ENCODE measurements at regions of chr2 and their contacts with region 1.

Region 1: GRCh38 chr2:235238537-235238936 is 255.3 kb upstream of the AGAP1 start:
- DNase-seq: peak; percentile 56
- H3K4me3 Mint-ChIP-seq: no peak overlapping the region
- H3K27ac Mint-ChIP-seq: no peak overlapping the region
- H3K4me1 Mint-ChIP-seq: no peaks in the 10 kb centered on the region
- H3K27me3 Mint-ChIP-seq: peaks cover 43% of the 10 kb centered on the region
- CTCF ChIP-seq: no peak

Region 2: DNA sequence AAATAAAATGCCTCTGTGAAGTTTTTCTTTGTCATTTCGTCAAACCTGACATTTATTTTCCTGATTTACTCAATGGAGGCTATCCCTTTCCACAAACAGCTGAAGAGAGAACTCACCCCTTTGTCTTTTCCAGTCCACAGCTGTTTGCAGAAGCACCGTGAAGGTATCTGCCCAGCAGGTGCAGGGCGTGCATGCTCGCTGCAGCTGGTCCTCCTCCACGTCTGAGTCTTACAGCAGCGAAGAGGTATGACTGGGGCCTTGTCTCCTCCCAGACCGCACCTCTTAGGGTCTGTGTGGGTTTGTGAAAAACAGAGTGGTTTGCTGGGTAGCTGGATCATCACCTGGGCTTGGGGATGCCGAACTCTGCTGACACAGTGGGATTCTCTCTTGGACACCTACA is 1178.3 kb before region 1 on chr2:
- CTCF ChIA-PET with region 1: no interaction called
- POLR2A ChIA-PET with region 1: no interaction called
- intact Hi-C with region 1: loop called (anchors 5 kb)
- DNase-seq: no peak
- H3K4me3 Mint-ChIP-seq: no peak overlapping the region
- H3K27ac Mint-ChIP-seq: no peak overlapping the region
- H3K4me1 Mint-ChIP-seq: peaks cover 4% of the 10 kb centered on the region
- H3K27me3 Mint-ChIP-seq: peaks cover 13% of the 10 kb centered on the region
- CTCF ChIP-seq: no peak

Region 3: DNA sequence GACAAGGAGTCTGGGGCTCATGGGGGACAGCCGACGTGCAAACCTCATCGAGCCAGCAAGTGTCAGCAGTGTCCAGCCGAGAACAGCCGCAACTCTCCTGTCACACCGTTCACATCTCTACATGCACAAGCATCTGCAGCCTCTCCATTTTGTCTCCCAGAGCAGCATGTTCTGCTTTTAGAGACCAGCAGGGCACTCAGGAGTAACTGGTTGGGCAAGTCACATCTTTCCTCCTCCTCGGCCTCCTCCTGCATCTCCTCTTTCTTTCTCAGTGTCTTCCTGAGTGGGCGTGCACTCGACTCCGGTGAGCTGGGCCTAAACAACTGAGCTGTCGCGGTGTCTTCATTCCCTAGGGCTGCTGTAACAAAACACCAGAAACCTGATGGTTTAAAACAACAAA is 36.8 kb before region 1 on chr2:
- CTCF ChIA-PET with region 1: no interaction called
- POLR2A ChIA-PET with region 1: no interaction called
- intact Hi-C with region 1: no loop called
- DNase-seq: no peak
- H3K4me3 Mint-ChIP-seq: no peak overlapping the region
- H3K27ac Mint-ChIP-seq: no peak overlapping the region
- H3K4me1 Mint-ChIP-seq: no peaks in the 10 kb centered on the region
- H3K27me3 Mint-ChIP-seq: peaks cover 74% of the 10 kb centered on the region
- CTCF ChIP-seq: no peak